H1 (cell line): ENCODE measurements at regions of chr4 and their contacts with region 1.

Region 1: DNA sequence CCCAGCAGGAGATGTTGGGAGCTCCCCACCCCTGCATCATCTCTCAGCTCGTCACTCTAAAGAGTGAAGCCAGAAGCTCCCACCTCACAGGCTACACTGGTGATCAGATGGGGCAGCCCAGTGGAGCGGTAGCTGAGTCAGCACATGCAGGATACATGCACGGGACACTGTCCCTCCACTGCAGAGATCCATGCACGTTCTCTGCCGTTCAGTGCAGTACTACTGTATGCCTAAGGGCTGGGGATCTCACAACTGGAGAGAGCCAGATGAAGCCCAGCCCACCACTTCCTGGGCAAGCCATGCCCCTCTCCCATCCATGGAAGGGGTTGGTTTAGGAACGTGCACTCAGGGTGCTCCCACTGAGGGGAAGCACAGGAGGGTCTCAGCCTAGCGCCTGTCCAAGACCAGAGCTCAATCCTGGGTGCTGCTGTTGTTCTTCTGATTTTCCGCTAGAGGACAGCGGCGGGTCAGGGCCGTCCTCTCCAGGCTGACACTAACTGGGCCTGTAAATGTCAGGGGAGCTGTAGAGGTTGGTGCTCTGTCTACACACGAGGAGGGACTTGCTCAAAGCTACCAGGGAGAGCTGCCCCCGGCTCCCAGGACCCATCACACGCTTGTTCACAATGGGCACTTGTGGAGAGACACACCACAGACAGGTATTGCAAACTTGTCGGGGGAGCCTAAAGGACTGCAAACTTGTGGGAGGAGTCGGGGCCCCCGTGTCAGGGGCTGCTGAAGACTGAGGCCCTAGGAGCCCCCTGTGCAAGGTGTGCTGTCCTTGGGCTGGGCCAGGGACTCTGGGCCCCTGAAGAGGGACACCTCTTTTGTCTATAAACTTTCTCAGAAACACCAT is 18.2 kb upstream of the ABLIM2 start:
- DNase-seq: peak; percentile 41 to 67
- H3K4me3 ChIP-seq: no peak overlapping the region
- H3K27ac ChIP-seq: no peak overlapping the region
- H3K4me1 ChIP-seq: no peaks in the 10 kb centered on the region
- H3K27me3 ChIP-seq: no peaks in the 10 kb centered on the region
- CTCF ChIP-seq: peak in 2 of 3 experiments; percentile 90 to 96; a peak in 3 of 4 replicates
- EP300 ChIP-seq: no peak
- POLR2A ChIP-seq: no peak
- RAD21 ChIP-seq: peak; percentile 88 to 91

Region 2: DNA sequence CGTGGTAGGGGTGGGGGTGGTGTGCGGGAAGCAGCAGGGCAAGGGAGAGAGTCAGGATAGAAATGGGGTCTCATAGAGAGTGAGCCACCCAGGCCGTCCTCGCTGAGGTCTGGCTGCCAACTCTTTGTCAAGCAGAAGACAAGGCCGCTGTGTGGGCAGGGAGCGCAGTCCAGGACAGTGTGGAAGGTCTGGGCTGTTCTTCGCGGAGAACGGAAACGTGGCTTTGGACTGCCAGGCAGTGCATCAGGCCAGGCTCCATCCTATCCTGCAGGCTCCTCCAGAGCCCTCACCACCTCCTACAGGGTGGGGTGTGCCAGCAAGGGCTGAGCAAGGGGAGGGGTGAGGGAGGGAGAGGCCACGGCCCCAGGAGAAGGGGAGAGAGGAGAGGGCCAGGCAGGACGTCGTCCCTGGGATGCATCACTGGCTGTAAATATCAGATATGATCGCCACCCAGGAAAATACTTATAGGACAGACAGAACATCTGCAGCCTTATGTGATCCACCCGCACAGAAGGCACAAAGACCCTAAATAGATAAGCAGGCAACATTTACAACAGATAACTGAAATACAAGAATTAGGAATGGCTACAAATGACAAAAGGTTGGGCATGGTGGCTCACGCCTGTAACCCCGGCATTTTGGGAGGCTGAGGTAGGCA is 103.4 kb before region 1 on chr4:
- CTCF ChIA-PET with region 1: interaction called, 11 read pairs
- POLR2A ChIA-PET with region 1: no interaction called
- DNase-seq: no peak
- H3K4me3 ChIP-seq: no peak overlapping the region
- H3K27ac ChIP-seq: no peak overlapping the region
- H3K4me1 ChIP-seq: peaks cover 0 to 17% (median 8%) of the 10 kb centered on the region in 4 experiments; a peak in 6 of 7 replicates
- H3K27me3 ChIP-seq: no peaks in the 10 kb centered on the region
- CTCF ChIP-seq: no peak
- EP300 ChIP-seq: no peak
- POLR2A ChIP-seq: no peak
- RAD21 ChIP-seq: no peak

Region 3: GRCh38 chr4:8158710-8159536 is 17.9 kb before region 1 on chr4 and contains the start of gene ABLIM2:
- CTCF ChIA-PET with region 1: interaction called, 14 read pairs
- POLR2A ChIA-PET with region 1: no interaction called
- DNase-seq: peak; percentile 91 to 99
- H3K4me3 ChIP-seq: peak within 1 kb of the TSS; percentile 63 to 75 (median 72)
- H3K27ac ChIP-seq: no peak within 1 kb of the TSS
- H3K4me1 ChIP-seq: peaks cover 0 to 5% (median 2%) of the 10 kb centered on the region in 4 experiments; a peak in 4 of 7 replicates
- H3K27me3 ChIP-seq: peaks cover 6 to 43% (median 30%) of the 10 kb centered on the region in 4 experiments
- CTCF ChIP-seq: no peak
- EP300 ChIP-seq: no peak
- POLR2A ChIP-seq: no peak
- RAD21 ChIP-seq: no peak
- total RNA-seq, gene ABLIM2: 2.8 and 3.0 TPM in 2 replicates

Region 4: DNA sequence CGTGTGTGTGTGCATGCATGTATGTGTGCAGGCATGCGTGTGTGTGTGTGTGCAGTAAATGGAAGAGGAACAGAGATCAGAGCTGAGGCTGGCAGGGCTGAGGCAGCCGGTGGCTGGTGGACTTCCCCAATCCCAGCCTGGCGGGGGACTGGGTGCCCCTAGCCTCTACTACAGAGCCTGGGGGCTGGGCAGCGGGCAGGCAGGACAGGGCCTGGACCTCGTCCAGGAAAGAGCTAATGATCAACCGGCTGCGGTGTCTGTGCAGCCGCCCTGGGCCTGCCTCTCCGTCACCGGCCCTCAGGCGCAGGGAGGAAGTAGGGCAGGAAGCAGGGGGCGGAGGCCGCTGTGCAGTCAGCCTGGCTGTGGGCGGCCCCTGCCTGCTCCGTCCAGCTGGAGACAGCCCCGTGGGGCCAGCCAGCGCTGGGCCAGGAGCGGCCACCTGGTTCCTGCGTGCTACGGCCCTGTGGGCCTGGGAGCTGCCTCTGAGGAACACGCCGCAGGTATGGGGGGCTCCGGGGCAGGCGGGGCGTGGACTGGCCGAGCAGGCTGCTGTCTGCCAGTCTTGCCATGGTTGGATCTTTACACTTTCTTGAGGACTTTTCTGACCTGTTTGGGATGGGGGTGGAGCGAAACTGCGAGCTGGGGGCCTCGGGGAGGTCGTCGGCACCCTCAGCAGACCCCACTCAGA is 22.3 kb after region 1 on chr4 and contains the start of gene SH3TC1:
- CTCF ChIA-PET with region 1: interaction called, 21 read pairs
- POLR2A ChIA-PET with region 1: no interaction called
- DNase-seq: no peak
- H3K4me3 ChIP-seq: no peak within 1 kb of the TSS
- H3K27ac ChIP-seq: no peak within 1 kb of the TSS
- H3K4me1 ChIP-seq: no peaks in the 10 kb centered on the region; a peak in 1 of 7 replicates
- H3K27me3 ChIP-seq: no peaks in the 10 kb centered on the region
- CTCF ChIP-seq: no peak
- EP300 ChIP-seq: no peak
- POLR2A ChIP-seq: no peak
- RAD21 ChIP-seq: no peak
- total RNA-seq, gene SH3TC1: 0.29 TPM in 1 of 2 replicates, not detected in the other

Region 5: GRCh38 chr4:8215001-8215427 is 38.2 kb after region 1 on chr4:
- CTCF ChIA-PET with region 1: interaction called, 23 read pairs
- POLR2A ChIA-PET with region 1: interaction called, 3 read pairs
- DNase-seq: no peak
- H3K4me3 ChIP-seq: no peak overlapping the region
- H3K27ac ChIP-seq: no peak overlapping the region
- H3K4me1 ChIP-seq: peaks cover 0 to 8% (median 0%) of the 10 kb centered on the region in 4 experiments; a peak in 1 of 7 replicates
- H3K27me3 ChIP-seq: no peaks in the 10 kb centered on the region
- CTCF ChIP-seq: no peak
- EP300 ChIP-seq: no peak
- POLR2A ChIP-seq: no peak
- RAD21 ChIP-seq: no peak

Region 6: DNA sequence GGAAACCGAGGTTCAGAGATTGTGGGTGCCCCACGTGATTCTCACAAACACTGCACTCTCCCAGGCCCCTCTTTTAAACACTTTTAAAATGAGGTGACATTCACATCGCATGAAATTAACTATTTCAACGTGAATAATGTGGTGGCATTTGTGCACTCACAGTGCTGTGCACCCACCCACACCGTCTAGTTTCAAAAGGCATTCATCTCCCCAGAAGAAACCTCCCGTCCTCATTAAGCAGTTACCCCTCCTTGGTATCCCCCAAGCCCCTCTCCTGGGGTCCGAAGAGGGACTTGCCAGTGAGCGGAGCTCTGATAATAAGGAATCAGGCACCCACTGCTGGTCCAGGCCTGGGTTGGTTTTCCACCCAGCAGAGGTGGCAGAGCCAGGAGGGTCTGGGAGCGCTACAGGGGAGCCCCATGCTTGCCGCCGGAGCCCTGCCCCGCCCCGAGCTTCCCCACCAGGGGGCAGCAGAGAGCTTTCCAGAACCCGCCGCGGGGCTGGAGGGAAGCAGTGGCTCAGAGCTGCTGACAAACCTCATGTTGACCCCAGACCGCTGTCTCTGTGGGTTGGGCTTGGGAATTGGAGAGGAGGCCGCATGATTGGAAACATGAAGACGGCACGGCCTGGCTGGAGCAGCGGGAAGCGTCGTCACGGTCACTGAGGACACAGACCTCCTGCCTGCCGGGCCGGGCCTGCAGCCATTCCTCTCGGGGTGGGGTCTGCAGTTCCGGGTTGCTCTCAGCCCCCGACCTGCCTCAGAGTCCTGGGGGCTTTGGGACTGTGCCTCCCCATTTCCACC is 65.3 kb after region 1 on chr4:
- CTCF ChIA-PET with region 1: interaction called, 68 read pairs
- POLR2A ChIA-PET with region 1: no interaction called
- DNase-seq: peak; percentile 76 to 100
- H3K4me3 ChIP-seq: no peak overlapping the region
- H3K27ac ChIP-seq: no peak overlapping the region
- H3K4me1 ChIP-seq: peaks cover 0 to 8% (median 3%) of the 10 kb centered on the region in 4 experiments; a peak in 6 of 7 replicates
- H3K27me3 ChIP-seq: no peaks in the 10 kb centered on the region
- CTCF ChIP-seq: peak in 2 of 3 experiments; percentile 87 to 97; a peak in 3 of 4 replicates
- EP300 ChIP-seq: no peak
- POLR2A ChIP-seq: no peak
- RAD21 ChIP-seq: peak; percentile 94 to 96

Region 7: DNA sequence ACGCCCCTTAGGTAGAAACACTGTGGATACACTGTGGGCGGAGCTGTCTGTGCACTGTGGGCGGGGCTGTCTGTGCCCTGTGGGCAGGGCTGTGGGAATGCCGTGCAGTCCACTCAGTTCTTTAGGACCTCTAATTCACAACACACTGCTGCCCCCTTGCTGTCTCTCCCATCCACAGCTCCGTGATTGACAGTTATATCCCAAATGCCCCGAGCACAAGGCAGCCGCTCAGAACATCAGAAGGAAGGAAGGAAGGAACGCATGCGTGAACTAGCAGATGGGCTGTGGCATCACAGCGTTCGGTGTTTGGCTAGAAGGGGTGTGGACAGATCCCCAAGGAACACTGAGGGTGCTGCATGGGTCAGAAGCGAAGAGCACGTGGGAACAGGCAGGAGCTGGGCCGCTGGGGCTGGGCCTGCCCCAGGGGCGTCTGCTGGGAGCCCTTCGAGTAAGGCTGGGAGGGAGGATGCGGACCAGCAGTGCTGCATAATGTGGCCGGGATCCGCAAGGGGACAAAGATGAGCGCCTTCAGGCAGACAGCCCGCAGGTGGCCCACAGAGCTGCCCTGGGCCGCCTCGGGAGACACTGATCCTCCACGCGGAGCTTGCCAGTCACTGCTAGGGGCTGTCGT is 234.0 kb after region 1 on chr4:
- CTCF ChIA-PET with region 1: interaction called, 13 read pairs
- POLR2A ChIA-PET with region 1: no interaction called
- DNase-seq: peak; percentile 53 to 85
- H3K4me3 ChIP-seq: no peak overlapping the region
- H3K27ac ChIP-seq: no peak overlapping the region
- H3K4me1 ChIP-seq: peaks cover 0 to 5% (median 4%) of the 10 kb centered on the region in 4 experiments; a peak in 6 of 7 replicates
- H3K27me3 ChIP-seq: no peaks in the 10 kb centered on the region
- CTCF ChIP-seq: peak in 2 of 3 experiments; percentile 62 to 73; a peak in 3 of 4 replicates
- EP300 ChIP-seq: no peak
- POLR2A ChIP-seq: no peak
- RAD21 ChIP-seq: peak; percentile 64 to 74